ENCODE measurements at regions of chr12 and their contacts with region 1.

Region 1: GRCh38 chr12:50637870-50638481 is 125.9 kb upstream of the ATF1 start:
- DNase-seq: peak in 1 of 2 donors; percentile 57
- H3K4me3 ChIP-seq: no peak overlapping the region
- H3K27ac ChIP-seq: no peak overlapping the region
- H3K4me1 ChIP-seq: peaks cover 4 to 46% (median 22%) of the 10 kb centered on the region in 4 donors
- H3K27me3 ChIP-seq: no peaks in the 10 kb centered on the region
- CTCF ChIP-seq: peak in 5 of 7 experiments; percentile 26 to 63 (median 57)
- EP300 ChIP-seq: no peak
- POLR2A ChIP-seq: no peak

Region 2: GRCh38 chr12:49930515-49931288 is 707.3 kb before region 1 on chr12:
- intact Hi-C with region 1: no loop called
- DNase-seq: no peak
- H3K4me3 ChIP-seq: no peak overlapping the region
- H3K27ac ChIP-seq: no peak overlapping the region
- H3K4me1 ChIP-seq: no peaks in the 10 kb centered on the region
- H3K27me3 ChIP-seq: peaks cover 0 to 7% (median 0%) of the 10 kb centered on the region in 3 donors
- CTCF ChIP-seq: no peak
- EP300 ChIP-seq: no peak
- POLR2A ChIP-seq: no peak

Region 3: GRCh38 chr12:50504798-50505385 is 133.1 kb before region 1 on chr12 and contains the start of gene DIP2B:
- intact Hi-C with region 1: loop called (anchors 5 kb)
- DNase-seq: peak; percentile 97 to 98
- H3K4me3 ChIP-seq: peak within 1 kb of the TSS; percentile 77 to 97 (median 84)
- H3K27ac ChIP-seq: peak within 1 kb of the TSS; percentile 94 to 98 (median 96)
- H3K4me1 ChIP-seq: peaks cover 14 to 50% (median 37%) of the 10 kb centered on the region in 4 donors
- H3K27me3 ChIP-seq: no peaks in the 10 kb centered on the region
- CTCF ChIP-seq: peak in 5 of 7 experiments; percentile 80 to 98 (median 94)
- EP300 ChIP-seq: no peak
- POLR2A ChIP-seq: no peak
- total RNA-seq, gene DIP2B: 5.8 to 136 (median 20.6) TPM

Region 4: DNA sequence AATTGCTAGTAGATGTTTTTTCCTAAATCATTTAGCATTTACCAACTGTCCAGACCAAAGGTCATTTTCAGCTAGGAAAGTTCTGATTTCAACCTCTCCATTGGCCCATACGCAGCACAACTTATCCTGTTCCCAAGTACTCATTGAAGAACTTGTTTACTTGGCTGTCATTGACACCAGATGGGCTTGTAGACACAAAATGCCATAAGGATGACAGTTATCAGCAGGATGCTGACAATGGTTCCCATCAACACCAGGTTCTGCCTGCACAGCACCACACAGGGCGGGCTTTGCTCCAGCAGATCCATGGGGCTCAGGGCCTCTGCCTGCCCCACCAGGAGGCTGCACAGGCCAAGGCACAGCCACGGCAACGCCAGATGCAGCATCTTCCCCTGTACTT is 168.2 kb after region 1 on chr12:
- intact Hi-C with region 1: no loop called
- DNase-seq: no peak
- H3K4me3 ChIP-seq: no peak overlapping the region
- H3K27ac ChIP-seq: peak overlapping the region in 1 of 5 donors; percentile 17
- H3K4me1 ChIP-seq: no peaks in the 10 kb centered on the region
- H3K27me3 ChIP-seq: no peaks in the 10 kb centered on the region
- CTCF ChIP-seq: no peak
- EP300 ChIP-seq: no peak
- POLR2A ChIP-seq: no peak

Measured in stomach (tissue), 19 donors.